Activated T-helper 1 cell treated with anti-CD3 and anti-CD28 coated beads, Interleukin-12 subunit alpha, Interleukin-12 subunit beta, Interleukin-2, Interleukin-4 antibody, amounts not matched to agents 30 ng/mL and 10 ng/mL and 1 ng/mL, durations not matched to agents 14 hours and 24 hours and 36 hours (primary cell): ENCODE measurements at regions of chr7 and their contacts with region 1.

Region 1: DNA sequence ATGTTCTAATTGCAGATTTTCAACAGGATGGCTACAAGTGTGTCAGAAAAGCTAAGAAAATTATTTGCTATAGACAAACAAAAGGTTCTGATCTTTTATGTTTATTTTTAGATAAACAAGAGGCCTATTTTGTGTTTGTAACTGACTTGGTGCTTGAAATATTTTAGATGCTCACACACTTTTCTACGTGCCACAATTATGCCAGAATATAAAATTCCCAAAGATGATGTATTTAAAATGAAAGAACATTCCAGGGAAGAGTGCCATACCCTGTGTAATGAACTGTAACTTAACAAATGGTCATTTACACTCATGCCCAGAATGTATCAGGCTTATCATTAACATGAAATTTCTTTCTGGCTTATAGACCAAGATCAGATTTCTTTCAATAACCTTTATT is 144.9 kb upstream of the MTPN start:
- DNase-seq: no peak
- H3K4me3 Mint-ChIP-seq: no peak overlapping the region
- H3K27ac Mint-ChIP-seq: no peak overlapping the region
- H3K4me1 Mint-ChIP-seq: no peaks in the 10 kb centered on the region
- H3K27me3 Mint-ChIP-seq: no peaks in the 10 kb centered on the region

Region 2: DNA sequence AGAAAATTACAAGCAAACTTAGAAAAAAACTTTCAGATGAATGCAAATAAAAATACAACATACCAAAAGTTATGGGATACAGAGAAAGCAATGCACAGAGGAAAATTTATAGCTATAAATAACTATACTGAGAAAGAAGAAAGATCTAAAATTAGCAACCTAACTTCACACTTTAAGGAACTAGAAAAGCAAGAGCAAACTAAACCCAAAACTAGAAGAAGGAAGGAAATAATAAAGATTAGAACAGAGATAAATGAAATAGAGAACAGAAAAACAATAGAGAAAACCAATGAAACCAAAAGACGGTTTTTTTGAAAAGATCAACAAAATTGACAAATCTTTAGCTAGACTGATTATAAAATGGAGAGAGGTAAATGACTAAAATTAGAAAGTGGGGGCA is 898.0 kb before region 1 on chr7:
- intact Hi-C with region 1: loop called (anchors 10 kb)
- DNase-seq: no peak
- H3K4me3 Mint-ChIP-seq: no peak overlapping the region
- H3K27ac Mint-ChIP-seq: no peak overlapping the region
- H3K4me1 Mint-ChIP-seq: peaks cover 11% of the 10 kb centered on the region
- H3K27me3 Mint-ChIP-seq: peaks cover 2% of the 10 kb centered on the region

Region 3: GRCh38 chr7:136194878-136195277 is 72.9 kb after region 1 on chr7:
- intact Hi-C with region 1: no loop called
- DNase-seq: no peak
- H3K4me3 Mint-ChIP-seq: no peak overlapping the region
- H3K27ac Mint-ChIP-seq: no peak overlapping the region
- H3K4me1 Mint-ChIP-seq: no peaks in the 10 kb centered on the region
- H3K27me3 Mint-ChIP-seq: no peaks in the 10 kb centered on the region